ENCODE measurements at regions of chr13 and their contacts with region 1.

Region 1: GRCh38 chr13:97359181-97360057 is 74.5 kb upstream of the RAP2A start:
- DNase-seq: no peak
- H3K4me3 ChIP-seq: no peak overlapping the region
- H3K27ac ChIP-seq: no peak overlapping the region
- H3K4me1 ChIP-seq: peaks cover 0 to 7% (median 0%) of the 10 kb centered on the region in 6 donors
- H3K27me3 ChIP-seq: no peaks in the 10 kb centered on the region
- CTCF ChIP-seq: peak; percentile 38 to 83 (median 78)
- POLR2A ChIP-seq: no peak

Region 2: GRCh38 chr13:97026531-97027161 is 332.8 kb before region 1 on chr13:
- intact Hi-C with region 1: loop called (anchors 10 kb)
- DNase-seq: no peak
- H3K4me3 ChIP-seq: no peak overlapping the region
- H3K27ac ChIP-seq: peak overlapping the region in 5 of 8 donors; percentile 30 to 60 (median 41)
- H3K4me1 ChIP-seq: peaks cover 0 to 16% (median 3%) of the 10 kb centered on the region in 6 donors
- H3K27me3 ChIP-seq: peaks cover 0 to 20% (median 0%) of the 10 kb centered on the region in 7 donors
- CTCF ChIP-seq: no peak
- POLR2A ChIP-seq: no peak

Measured in spleen (tissue), 13 donors.